Stomach (tissue), 19 donors: ENCODE measurements at regions of chr15 and their contacts with region 1.

Region 1: GRCh38 chr15:77659350-77660321 is 26.9 kb upstream of the LINGO1 start:
- DNase-seq: peak; percentile 36 to 89
- H3K4me3 ChIP-seq: no peak overlapping the region
- H3K27ac ChIP-seq: no peak overlapping the region
- H3K4me1 ChIP-seq: peaks cover 0 to 4% (median 0%) of the 10 kb centered on the region in 4 donors
- H3K27me3 ChIP-seq: peaks cover 0 to 88% (median 13%) of the 10 kb centered on the region in 3 donors
- CTCF ChIP-seq: no peak
- EP300 ChIP-seq: no peak
- POLR2A ChIP-seq: no peak

Region 2: GRCh38 chr15:77738441-77739302 is 79.0 kb after region 1 on chr15:
- intact Hi-C with region 1: loop called (anchors 10 kb)
- DNase-seq: peak in 1 of 2 donors; percentile 60
- H3K4me3 ChIP-seq: no peak overlapping the region
- H3K27ac ChIP-seq: no peak overlapping the region
- H3K4me1 ChIP-seq: no peaks in the 10 kb centered on the region
- H3K27me3 ChIP-seq: peaks cover 0 to 99% (median 27%) of the 10 kb centered on the region in 3 donors
- CTCF ChIP-seq: no peak
- EP300 ChIP-seq: no peak
- POLR2A ChIP-seq: no peak